Endothelial cell of umbilical vein (primary cell): ENCODE measurements at regions of chr9 and their contacts with region 1.

Region 1: DNA sequence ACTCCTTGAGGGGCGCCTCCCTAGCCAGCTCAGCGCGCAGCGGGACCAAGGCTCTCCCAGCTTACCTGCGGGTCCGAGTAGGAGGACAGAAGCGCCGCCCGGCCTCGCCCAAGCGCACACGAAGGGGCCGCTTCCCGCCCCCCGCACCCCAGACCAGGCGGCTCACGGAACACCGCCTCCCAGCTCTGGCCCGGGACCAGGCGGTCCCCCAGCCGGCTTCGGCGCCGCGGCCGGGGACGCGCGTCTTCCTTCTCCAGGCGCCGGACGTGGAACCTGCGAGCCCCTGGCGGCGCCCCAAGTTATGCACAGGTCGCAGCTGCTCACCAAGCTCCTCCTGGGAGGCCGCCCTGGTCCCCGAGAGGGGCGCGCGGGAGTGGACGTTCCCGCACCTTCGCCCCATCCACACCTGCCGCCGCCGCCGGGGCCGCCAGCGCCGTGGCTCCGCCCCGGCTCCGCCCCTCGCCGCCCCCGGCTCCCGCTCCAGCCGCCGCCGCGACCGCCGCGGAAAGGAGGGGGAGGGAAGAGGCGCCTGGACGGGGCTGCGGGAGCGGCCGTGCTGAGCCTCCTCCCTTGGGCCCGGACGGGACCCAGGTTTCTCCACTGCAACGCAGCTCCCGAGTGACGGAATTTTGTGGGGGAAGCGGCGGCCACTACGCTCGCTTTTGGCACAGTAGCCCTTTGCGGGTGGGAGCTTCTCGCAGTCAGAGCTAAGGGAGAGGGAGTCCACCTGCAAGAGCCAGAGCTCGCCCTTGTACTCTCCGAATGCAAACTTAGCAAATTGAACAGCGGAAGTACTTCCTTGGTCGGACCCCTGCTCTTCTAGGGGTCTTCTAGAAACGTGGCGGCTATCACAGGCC is 77.5 kb upstream of the IFNE start:
- DNase-seq: peak; percentile 68
- H3K4me3 ChIP-seq: peak overlapping the region; percentile 78 to 97 (median 92)
- H3K27ac ChIP-seq: peak overlapping the region; percentile 81
- H3K4me1 ChIP-seq: peaks cover 24% of the 10 kb centered on the region
- H3K27me3 ChIP-seq: no peaks in the 10 kb centered on the region
- CTCF ChIP-seq: peak in 1 of 2 donors; percentile 14
- POLR2A ChIP-seq: peak; percentile 49

Region 2: GRCh38 chr9:21031091-21031807 is 528.4 kb before region 1 on chr9 and contains the start of gene HACD4:
- CTCF ChIA-PET with region 1: no interaction called
- POLR2A ChIA-PET with region 1: no interaction called
- dilution Hi-C with region 1: no loop called
- intact Hi-C with region 1: no loop called
- DNase-seq: peak; percentile 13
- H3K4me3 ChIP-seq: peak within 1 kb of the TSS; percentile 37 to 52 (median 43)
- H3K27ac ChIP-seq: no peak within 1 kb of the TSS
- H3K4me1 ChIP-seq: peaks cover 6% of the 10 kb centered on the region
- H3K27me3 ChIP-seq: no peaks in the 10 kb centered on the region
- CTCF ChIP-seq: no peak
- POLR2A ChIP-seq: no peak
- total RNA-seq, gene HACD4: 1.2 and 1.4 TPM in 2 replicates

Region 3: GRCh38 chr9:21334701-21335632 is 224.7 kb before region 1 on chr9 and contains the start of gene KLHL9:
- CTCF ChIA-PET with region 1: no interaction called
- POLR2A ChIA-PET with region 1: no interaction called
- dilution Hi-C with region 1: no loop called
- intact Hi-C with region 1: loop called (anchors 5 kb)
- DNase-seq: peak; percentile 91
- H3K4me3 ChIP-seq: peak within 1 kb of the TSS; percentile 60 to 96 (median 95)
- H3K27ac ChIP-seq: peak within 1 kb of the TSS; percentile 94
- H3K4me1 ChIP-seq: peaks cover 35% of the 10 kb centered on the region
- H3K27me3 ChIP-seq: peaks cover 8 to 12% of the 10 kb centered on the region in 2 experiments
- CTCF ChIP-seq: no peak
- POLR2A ChIP-seq: peak; percentile 74
- total RNA-seq, gene KLHL9: 23.5 and 23.6 TPM in 2 replicates

Region 4: GRCh38 chr9:21491742-21492141 is 67.9 kb before region 1 on chr9:
- CTCF ChIA-PET with region 1: no interaction called
- POLR2A ChIA-PET with region 1: no interaction called
- dilution Hi-C with region 1: no loop called
- intact Hi-C with region 1: loop called (anchors 5 kb)
- DNase-seq: peak; percentile 21
- H3K4me3 ChIP-seq: no peak overlapping the region
- H3K27ac ChIP-seq: no peak overlapping the region
- H3K4me1 ChIP-seq: no peaks in the 10 kb centered on the region
- H3K27me3 ChIP-seq: no peaks in the 10 kb centered on the region
- CTCF ChIP-seq: no peak
- POLR2A ChIP-seq: no peak

Region 5: GRCh38 chr9:21549251-21549765 is 10.3 kb before region 1 on chr9:
- CTCF ChIA-PET with region 1: interaction called, 5 read pairs
- POLR2A ChIA-PET with region 1: no interaction called
- dilution Hi-C with region 1: no loop called
- intact Hi-C with region 1: loop called (anchors 1 kb)
- DNase-seq: peak; percentile 100
- H3K4me3 ChIP-seq: no peak overlapping the region
- H3K27ac ChIP-seq: peak overlapping the region; percentile 92
- H3K4me1 ChIP-seq: peaks cover 61% of the 10 kb centered on the region
- H3K27me3 ChIP-seq: no peaks in the 10 kb centered on the region
- CTCF ChIP-seq: no peak
- POLR2A ChIP-seq: peak; percentile 57

Region 6: GRCh38 chr9:21576331-21577189 is 16.9 kb after region 1 on chr9:
- CTCF ChIA-PET with region 1: interaction called, 12 read pairs
- POLR2A ChIA-PET with region 1: interaction called, 3 read pairs
- dilution Hi-C with region 1: no loop called
- intact Hi-C with region 1: loop called (anchors 1 kb)
- DNase-seq: peak; percentile 89
- H3K4me3 ChIP-seq: peak overlapping the region in 2 of 3 experiments; percentile 52 to 73
- H3K27ac ChIP-seq: peak overlapping the region; percentile 96
- H3K4me1 ChIP-seq: peaks cover 22% of the 10 kb centered on the region
- H3K27me3 ChIP-seq: no peaks in the 10 kb centered on the region
- CTCF ChIP-seq: no peak
- POLR2A ChIP-seq: no peak

Region 7: GRCh38 chr9:21789541-21790037 is 229.9 kb after region 1 on chr9:
- CTCF ChIA-PET with region 1: interaction called, 10 read pairs
- POLR2A ChIA-PET with region 1: no interaction called
- dilution Hi-C with region 1: loop called (anchors 25 kb)
- intact Hi-C with region 1: loop called (anchors 1 kb)
- DNase-seq: peak; percentile 85
- H3K4me3 ChIP-seq: peak overlapping the region in 1 of 3 experiments; percentile 69
- H3K27ac ChIP-seq: no peak overlapping the region
- H3K4me1 ChIP-seq: no peaks in the 10 kb centered on the region
- H3K27me3 ChIP-seq: peaks cover 5 to 23% of the 10 kb centered on the region in 2 experiments
- CTCF ChIP-seq: peak; percentile 45 to 57
- POLR2A ChIP-seq: no peak